A549 (cell line): ENCODE measurements at regions of chr7 and their contacts with region 1.

Region 1: GRCh38 chr7:123143252-123144006 is 56.3 kb downstream of the SLC13A1 start:
- DNase-seq: no peak
- ATAC-seq: no peak
- H3K4me3 ChIP-seq: no peak overlapping the region
- H3K27ac ChIP-seq: no peak overlapping the region
- H3K4me1 ChIP-seq: no peaks in the 10 kb centered on the region
- CTCF ChIP-seq: no peak
- EP300 ChIP-seq: no peak
- POLR2A ChIP-seq: no peak
- RAD21 ChIP-seq: no peak

Region 2: DNA sequence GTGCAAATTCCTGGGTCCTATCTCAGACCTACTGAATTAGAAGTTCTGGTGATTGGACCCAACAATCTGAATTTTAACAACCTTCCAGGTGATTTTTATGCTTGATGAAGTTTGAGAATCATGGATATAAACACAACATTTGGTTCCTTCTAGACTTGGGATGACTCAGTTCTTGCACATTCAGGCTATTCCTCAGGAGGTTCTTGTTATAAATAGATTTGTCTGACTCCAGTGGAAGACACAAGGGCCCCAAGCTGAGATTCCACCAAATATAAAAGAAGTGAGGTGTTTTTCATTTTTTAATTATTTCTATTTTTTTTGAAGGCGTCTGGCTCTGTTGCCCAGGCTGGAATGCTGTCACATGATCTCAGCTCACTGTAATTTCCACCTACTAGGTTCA is 138.5 kb before region 1 on chr7:
- CTCF ChIA-PET with region 1: no interaction called
- POLR2A ChIA-PET with region 1: no interaction called
- DNase-seq: no peak
- ATAC-seq: no peak
- H3K4me3 ChIP-seq: no peak overlapping the region
- H3K27ac ChIP-seq: no peak overlapping the region
- H3K4me1 ChIP-seq: no peaks in the 10 kb centered on the region
- CTCF ChIP-seq: no peak
- EP300 ChIP-seq: no peak
- POLR2A ChIP-seq: no peak
- RAD21 ChIP-seq: no peak

Region 3: GRCh38 chr7:123154231-123154860 is 10.9 kb after region 1 on chr7:
- CTCF ChIA-PET with region 1: interaction called, 19 read pairs
- POLR2A ChIA-PET with region 1: no interaction called
- DNase-seq: peak; percentile 34 to 79
- ATAC-seq: peak; percentile 97 to 99
- H3K4me3 ChIP-seq: no peak overlapping the region
- H3K27ac ChIP-seq: no peak overlapping the region
- H3K4me1 ChIP-seq: no peaks in the 10 kb centered on the region
- CTCF ChIP-seq: peak; percentile 77
- EP300 ChIP-seq: no peak
- POLR2A ChIP-seq: no peak
- RAD21 ChIP-seq: peak; percentile 55 to 67